Panc1 (cell line): ENCODE measurements at regions of chr12 and their contacts with region 1.

Region 1: GRCh38 chr12:113469949-113470743 is 1.5 kb downstream of the LHX5 start:
- DNase-seq: no peak
- ATAC-seq: no peak
- H3K4me3 ChIP-seq: no peak overlapping the region
- H3K27ac ChIP-seq: no peak overlapping the region
- H3K4me1 ChIP-seq: peaks cover 13% of the 10 kb centered on the region
- H3K27me3 ChIP-seq: peaks cover 63% of the 10 kb centered on the region
- CTCF ChIP-seq: no peak

Region 2: GRCh38 chr12:113413488-113413939 is 56.6 kb before region 1 on chr12:
- CTCF ChIA-PET with region 1: no interaction called
- POLR2A ChIA-PET with region 1: no interaction called
- in situ Hi-C with region 1: no loop called
- intact Hi-C with region 1: no loop called
- DNase-seq: no peak
- ATAC-seq: no peak
- H3K4me3 ChIP-seq: no peak overlapping the region
- H3K27ac ChIP-seq: no peak overlapping the region
- H3K4me1 ChIP-seq: no peaks in the 10 kb centered on the region
- H3K27me3 ChIP-seq: no peaks in the 10 kb centered on the region
- CTCF ChIP-seq: no peak

Region 3: GRCh38 chr12:113960030-113960429 is 489.9 kb after region 1 on chr12:
- CTCF ChIA-PET with region 1: interaction called, 12 read pairs
- POLR2A ChIA-PET with region 1: no interaction called
- in situ Hi-C with region 1: no loop called
- intact Hi-C with region 1: no loop called
- DNase-seq: no peak
- ATAC-seq: no peak
- H3K4me3 ChIP-seq: no peak overlapping the region
- H3K27ac ChIP-seq: no peak overlapping the region
- H3K4me1 ChIP-seq: peaks cover 6% of the 10 kb centered on the region; the same call in 1 of the 2 replicates
- H3K27me3 ChIP-seq: no peaks in the 10 kb centered on the region
- CTCF ChIP-seq: no peak